ENCODE measurements at regions of chr3 and their contacts with region 1.

Region 1: GRCh38 chr3:129934234-129935123 is 40.0 kb upstream of the TRH start:
- DNase-seq: peak; percentile 23
- ATAC-seq: peak; percentile 51
- H3K4me3 ChIP-seq: peak overlapping the region; percentile 23 to 53 (median 44)
- H3K27ac ChIP-seq: no peak overlapping the region
- H3K4me1 ChIP-seq: peaks cover 45% of the 10 kb centered on the region
- H3K27me3 ChIP-seq: 0 out of 5 replicates have a peak, but pooled peaks cover 0 to 9% of the 10 kb centered on the region in 2 experiments
- CTCF ChIP-seq: peak; percentile 89
- EP300 ChIP-seq: no peak
- POLR2A ChIP-seq: no peak
- RAD21 ChIP-seq: peak; percentile 77

Region 2: DNA sequence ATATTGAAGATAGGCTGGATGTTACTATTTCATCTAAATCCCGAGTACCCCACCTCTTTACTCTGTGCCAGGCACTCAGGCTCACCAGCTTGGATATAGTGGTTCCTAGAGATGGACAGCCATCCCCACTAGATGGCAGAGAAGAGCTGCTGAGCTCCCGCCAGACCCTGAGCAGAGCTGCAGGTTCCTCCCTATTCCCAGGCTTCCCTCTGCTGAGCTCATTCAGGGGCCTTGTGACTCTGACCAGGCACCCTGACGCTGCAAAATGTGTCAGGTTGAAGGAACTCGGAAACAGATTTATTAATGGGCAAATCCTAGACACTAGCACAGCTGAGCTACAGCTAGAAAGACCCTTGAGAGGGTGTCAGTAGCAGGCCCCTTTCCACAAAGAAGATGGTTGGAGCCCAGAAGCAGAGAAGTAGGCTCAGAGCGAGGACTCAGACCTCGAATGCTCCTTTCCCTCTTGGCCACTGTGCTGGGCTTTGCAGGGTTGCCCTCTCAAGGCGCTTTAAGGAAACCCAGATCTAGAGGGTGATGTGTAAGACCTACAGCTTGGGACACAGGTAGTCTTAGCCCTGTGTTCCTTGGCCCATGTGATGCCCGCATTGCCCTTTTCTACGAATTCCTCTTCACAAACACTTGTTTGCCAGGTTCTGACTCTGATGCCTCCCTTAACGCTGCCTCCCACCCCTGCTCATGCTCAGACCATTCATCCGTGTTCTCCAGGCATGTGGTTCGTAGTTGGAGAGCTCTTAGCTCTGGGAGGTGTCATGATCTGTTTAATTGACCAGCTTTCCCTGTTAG is 444.0 kb before region 1 on chr3:
- CTCF ChIA-PET with region 1: no interaction called
- POLR2A ChIA-PET with region 1: interaction called, 3 read pairs
- in situ Hi-C with region 1: no loop called
- intact Hi-C with region 1: loop called (anchors 1 kb)
- DNase-seq: peak; percentile 83
- ATAC-seq: peak; percentile 94
- H3K4me3 ChIP-seq: no peak overlapping the region
- H3K27ac ChIP-seq: peak overlapping the region; percentile 23
- H3K4me1 ChIP-seq: peaks cover 31% of the 10 kb centered on the region
- H3K27me3 ChIP-seq: no peaks in the 10 kb centered on the region
- CTCF ChIP-seq: peak; percentile 96
- EP300 ChIP-seq: no peak
- POLR2A ChIP-seq: no peak
- RAD21 ChIP-seq: peak; percentile 97

Region 3: DNA sequence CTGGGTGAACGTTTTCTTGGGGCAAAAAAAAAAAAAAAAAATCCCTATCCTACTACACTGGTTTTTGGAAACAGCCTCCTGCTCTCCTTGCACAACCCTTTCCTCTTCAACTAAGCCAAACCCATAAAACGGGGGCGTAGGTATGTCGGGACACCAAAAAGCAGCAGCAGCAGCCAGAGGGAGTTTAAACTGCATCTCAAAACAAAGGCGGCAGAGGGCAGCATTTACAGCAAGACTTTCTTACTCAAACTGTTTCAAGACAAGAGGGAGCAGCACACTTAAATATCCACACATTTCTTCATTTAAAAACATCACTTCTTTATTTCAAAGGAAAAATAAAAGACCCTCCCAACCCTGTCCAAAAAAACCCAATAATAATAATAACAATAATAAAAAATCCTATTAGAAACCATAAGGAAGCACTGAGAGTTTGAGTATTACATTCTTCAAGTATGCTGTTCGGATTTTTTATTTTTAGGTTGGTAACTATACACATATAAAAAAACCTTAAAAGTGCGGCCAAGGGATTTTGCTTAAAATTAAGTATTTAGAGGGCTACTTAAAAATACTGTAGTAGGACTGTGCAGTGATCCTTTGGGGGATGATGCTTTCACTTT is 284.1 kb before region 1 on chr3:
- CTCF ChIA-PET with region 1: no interaction called
- POLR2A ChIA-PET with region 1: no interaction called
- in situ Hi-C with region 1: loop called (anchors 10 kb)
- intact Hi-C with region 1: loop called (anchors 5 kb)
- DNase-seq: peak; percentile 48
- ATAC-seq: no peak
- H3K4me3 ChIP-seq: no peak overlapping the region; a peak in 1 of 6 replicates
- H3K27ac ChIP-seq: no peak overlapping the region
- H3K4me1 ChIP-seq: peaks cover 50% of the 10 kb centered on the region
- H3K27me3 ChIP-seq: no peaks in the 10 kb centered on the region; a peak in 1 of 5 replicates
- CTCF ChIP-seq: peak; percentile 56
- EP300 ChIP-seq: no peak
- POLR2A ChIP-seq: peak in 1 of 2 experiments; percentile 22; a peak in 1 of 4 replicates
- RAD21 ChIP-seq: peak; percentile 37; the same call in 1 of the 2 replicates

Region 4: DNA sequence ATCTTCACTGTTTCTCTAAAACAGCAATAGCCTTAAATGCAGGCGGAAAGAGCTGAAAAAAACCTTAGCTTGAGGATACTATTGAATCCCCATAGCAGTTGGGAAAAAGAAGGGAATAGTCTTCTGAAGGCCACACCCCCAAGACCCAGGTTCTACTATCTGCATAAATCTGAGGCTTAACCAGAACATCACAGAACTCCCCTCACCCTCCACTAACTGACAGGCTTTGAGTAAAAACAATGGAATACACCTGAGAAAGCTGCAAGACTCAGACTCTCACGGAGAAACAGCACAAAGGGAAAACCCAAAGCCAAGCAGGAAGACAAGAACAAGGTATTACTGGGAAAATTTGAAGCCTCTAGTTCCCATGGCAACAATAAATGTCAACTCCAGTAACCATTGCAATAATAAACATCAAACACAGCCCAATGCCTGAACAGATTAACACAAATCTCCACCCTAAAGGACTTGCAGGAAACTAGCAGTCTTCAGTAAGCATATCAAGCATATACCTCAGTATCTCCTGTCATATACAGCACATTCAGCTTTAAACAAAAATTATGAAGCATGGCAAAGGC is 97.3 kb before region 1 on chr3:
- CTCF ChIA-PET with region 1: no interaction called
- POLR2A ChIA-PET with region 1: no interaction called
- in situ Hi-C with region 1: loop called (anchors 10 kb)
- intact Hi-C with region 1: loop called (anchors 5 kb)
- DNase-seq: no peak
- ATAC-seq: no peak
- H3K4me3 ChIP-seq: no peak overlapping the region
- H3K27ac ChIP-seq: no peak overlapping the region
- H3K4me1 ChIP-seq: peaks cover 18% of the 10 kb centered on the region
- H3K27me3 ChIP-seq: no peaks in the 10 kb centered on the region
- CTCF ChIP-seq: no peak
- EP300 ChIP-seq: no peak
- POLR2A ChIP-seq: no peak
- RAD21 ChIP-seq: no peak

Region 5: DNA sequence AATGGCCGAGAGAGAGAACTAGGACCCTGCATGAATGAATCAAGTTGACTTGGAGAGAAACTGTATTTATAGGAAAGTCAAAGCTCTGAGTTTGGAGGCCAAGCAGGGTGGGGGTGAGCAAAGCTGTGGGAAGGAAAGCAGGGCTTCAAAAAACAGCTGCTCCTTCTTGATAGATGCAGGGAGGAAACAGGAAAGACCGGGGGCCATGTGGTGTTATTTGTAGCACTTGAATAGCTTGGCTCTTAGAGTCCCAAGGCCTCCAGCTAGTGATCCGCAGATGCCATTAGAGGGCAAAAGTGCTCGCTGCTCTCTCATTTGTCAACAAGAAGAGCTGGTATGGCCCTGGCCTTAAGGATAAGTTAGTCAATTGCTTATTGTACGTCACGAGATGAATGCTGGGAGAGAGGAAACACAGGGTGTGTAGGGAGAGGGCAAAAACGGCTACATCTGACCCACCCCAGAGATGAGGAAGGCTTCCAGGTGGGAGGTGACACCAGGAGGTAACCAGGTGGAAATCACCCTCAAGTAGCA is 146.9 kb after region 1 on chr3 and contains the start of gene ALG1L2:
- CTCF ChIA-PET with region 1: no interaction called
- POLR2A ChIA-PET with region 1: no interaction called
- in situ Hi-C with region 1: no loop called
- intact Hi-C with region 1: no loop called
- DNase-seq: no peak
- ATAC-seq: peak; percentile 75
- H3K4me3 ChIP-seq: no peak within 1 kb of the TSS
- H3K27ac ChIP-seq: no peak within 1 kb of the TSS
- H3K4me1 ChIP-seq: no peaks in the 10 kb centered on the region
- H3K27me3 ChIP-seq: no peaks in the 10 kb centered on the region; a peak in 1 of 5 replicates
- CTCF ChIP-seq: no peak
- EP300 ChIP-seq: no peak
- POLR2A ChIP-seq: no peak
- RAD21 ChIP-seq: no peak
- total RNA-seq, gene ALG1L2: 0.55 TPM in 1 of 2 replicates, not detected in the other

Region 6: GRCh38 chr3:130093741-130094391 is 159.4 kb after region 1 on chr3:
- CTCF ChIA-PET with region 1: no interaction called
- POLR2A ChIA-PET with region 1: no interaction called
- in situ Hi-C with region 1: no loop called
- intact Hi-C with region 1: loop called (anchors 1 kb)
- DNase-seq: no peak
- ATAC-seq: no peak
- H3K4me3 ChIP-seq: peak overlapping the region in 1 of 3 experiments; percentile 4; a peak in 1 of 6 replicates
- H3K27ac ChIP-seq: no peak overlapping the region
- H3K4me1 ChIP-seq: peaks cover 6% of the 10 kb centered on the region; the same call in 1 of the 2 replicates
- H3K27me3 ChIP-seq: no peaks in the 10 kb centered on the region
- CTCF ChIP-seq: no peak
- EP300 ChIP-seq: no peak
- POLR2A ChIP-seq: no peak
- RAD21 ChIP-seq: no peak